G401 (cell line): ENCODE measurements at regions of chr20 and their contacts with region 1.

Region 1: GRCh38 chr20:37165031-37165430 is 14.1 kb upstream of the RPN2 start:
- DNase-seq: no peak

Region 2: DNA sequence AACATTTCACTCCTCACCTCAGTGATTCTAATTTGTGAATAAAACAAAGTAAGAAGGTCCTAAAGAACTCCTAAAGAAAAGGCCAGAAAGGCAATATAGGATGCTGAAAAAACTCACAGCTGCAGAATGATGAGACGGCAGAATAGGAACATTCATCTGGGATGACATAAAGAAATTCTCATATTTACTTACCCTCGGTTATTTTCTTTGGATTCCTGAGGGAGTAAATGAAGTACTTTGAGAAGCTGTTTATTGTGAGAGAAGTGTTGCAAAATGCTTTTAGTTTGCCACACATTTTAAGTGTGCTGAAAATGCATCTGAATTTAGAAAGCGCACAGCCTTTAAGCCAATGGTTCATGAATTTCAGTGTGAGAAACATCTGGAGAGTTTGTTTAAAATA is 33.5 kb before region 1 on chr20:
- in situ Hi-C with region 1: loop called (anchors 5 kb)
- DNase-seq: no peak

Region 3: GRCh38 chr20:37202267-37202943 is 37.4 kb after region 1 on chr20:
- in situ Hi-C with region 1: no loop called
- DNase-seq: peak; percentile 43

Region 4: DNA sequence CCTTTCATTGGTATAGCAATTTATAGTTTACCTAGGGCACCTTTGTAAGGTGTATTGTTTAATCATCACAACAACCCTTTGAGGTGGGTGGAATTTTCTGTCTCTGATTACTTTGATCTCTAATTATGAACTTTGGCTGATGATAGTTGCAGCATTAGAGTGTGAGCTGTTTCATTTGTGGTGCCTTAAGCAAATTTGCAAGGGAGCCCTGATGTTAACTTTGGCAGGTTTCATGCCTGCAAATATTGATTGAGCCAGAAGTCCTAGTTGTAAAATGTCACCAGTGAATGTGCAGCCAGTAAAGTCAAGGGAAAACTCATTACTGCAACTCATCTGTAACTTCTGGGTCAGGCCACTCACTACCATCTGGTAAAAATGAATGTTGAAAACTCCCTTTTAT is 558.6 kb after region 1 on chr20:
- in situ Hi-C with region 1: no loop called
- DNase-seq: no peak